ENCODE measurements at regions of chr22 and their contacts with region 1.

Region 1: GRCh38 chr22:40856513-40857308 is at the starts of genes ST13 and XPNPEP3:
- DNase-seq: peak; percentile 96
- H3K4me3 Mint-ChIP-seq: peak within 1 kb of the TSS; percentile 97
- H3K27ac Mint-ChIP-seq: peak within 1 kb of the TSS; percentile 99
- H3K4me1 Mint-ChIP-seq: peaks cover 15% of the 10 kb centered on the region
- H3K27me3 Mint-ChIP-seq: no peaks in the 10 kb centered on the region
- CTCF ChIP-seq: no peak
- total RNA-seq, gene ST13: 191 and 231 TPM in 2 replicates
- total RNA-seq, gene XPNPEP3: 33.1 and 47.2 TPM in 2 replicates

Region 2: DNA sequence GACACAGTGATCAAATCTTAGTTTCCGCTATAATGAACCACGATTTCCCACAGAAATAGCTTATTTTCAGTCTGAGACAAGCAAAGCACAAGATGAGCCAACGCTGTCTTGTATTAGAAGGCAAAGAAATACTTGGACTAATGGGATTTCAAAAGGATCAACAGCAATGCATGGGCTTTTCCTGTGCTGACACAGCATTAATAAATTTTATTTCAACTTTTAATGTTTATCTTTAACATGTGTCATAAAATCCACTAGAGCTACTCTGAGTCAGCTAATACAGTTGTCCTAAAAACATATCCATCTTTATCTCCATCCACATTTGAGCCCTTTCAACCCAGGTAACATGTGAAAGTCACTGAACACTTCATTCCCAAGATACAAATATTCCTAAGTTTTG is 22.1 kb before region 1 on chr22:
- CTCF ChIA-PET with region 1: interaction called, 4 read pairs
- POLR2A ChIA-PET with region 1: interaction called, 11 read pairs
- intact Hi-C with region 1: no loop called
- DNase-seq: no peak
- H3K4me3 Mint-ChIP-seq: no peak overlapping the region
- H3K27ac Mint-ChIP-seq: no peak overlapping the region
- H3K4me1 Mint-ChIP-seq: no peaks in the 10 kb centered on the region
- H3K27me3 Mint-ChIP-seq: no peaks in the 10 kb centered on the region
- CTCF ChIP-seq: no peak

Region 3: DNA sequence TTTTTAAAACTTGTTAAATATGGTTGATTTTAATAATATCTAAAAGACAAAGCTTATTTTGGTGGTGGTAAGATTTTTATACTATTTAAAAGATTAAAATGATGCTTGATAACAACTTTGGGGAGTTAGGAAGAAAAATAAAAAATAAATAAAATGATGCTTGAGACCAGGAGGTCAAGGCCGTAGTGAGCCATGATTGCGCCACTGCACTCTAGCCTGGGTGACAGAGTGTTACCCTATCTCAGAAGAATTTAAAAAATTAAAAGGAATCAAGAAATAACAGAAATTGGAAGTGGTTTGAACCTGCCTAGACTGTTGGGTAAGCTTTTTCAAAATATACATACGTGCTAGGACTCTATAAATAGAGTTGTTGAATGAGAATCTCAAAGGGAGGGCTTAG is 17.3 kb after region 1 on chr22:
- CTCF ChIA-PET with region 1: interaction called, 4 read pairs
- POLR2A ChIA-PET with region 1: interaction called, 58 read pairs
- intact Hi-C with region 1: no loop called
- DNase-seq: no peak
- H3K4me3 Mint-ChIP-seq: no peak overlapping the region
- H3K27ac Mint-ChIP-seq: no peak overlapping the region
- H3K4me1 Mint-ChIP-seq: no peaks in the 10 kb centered on the region
- H3K27me3 Mint-ChIP-seq: no peaks in the 10 kb centered on the region
- CTCF ChIP-seq: no peak

Region 4: DNA sequence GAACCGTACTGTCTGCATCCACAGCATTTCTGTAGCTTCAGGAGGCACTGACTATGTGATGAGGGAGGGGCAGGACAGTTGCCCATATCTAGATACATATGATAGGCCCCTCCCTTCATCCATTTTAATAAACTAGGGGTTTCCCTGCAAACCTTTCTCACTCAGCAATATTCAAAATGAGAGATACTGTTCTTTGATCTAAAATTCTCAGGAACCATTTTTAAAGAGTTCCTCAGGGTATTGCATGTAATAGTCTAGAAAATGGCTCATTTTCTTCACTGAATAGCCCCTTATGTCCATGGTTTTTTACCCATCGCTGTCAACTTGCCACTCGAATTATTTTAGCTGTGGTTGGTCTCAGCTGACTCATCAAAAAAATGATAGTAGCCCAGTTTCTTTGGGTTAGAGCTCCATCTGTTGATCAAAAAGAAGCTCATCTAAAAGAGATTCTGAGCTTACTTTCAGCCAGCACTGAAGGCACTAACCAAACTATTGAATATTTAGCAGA is 42.2 kb after region 1 on chr22:
- CTCF ChIA-PET with region 1: no interaction called
- POLR2A ChIA-PET with region 1: interaction called, 10 read pairs
- intact Hi-C with region 1: no loop called
- DNase-seq: peak; percentile 53
- H3K4me3 Mint-ChIP-seq: no peak overlapping the region
- H3K27ac Mint-ChIP-seq: no peak overlapping the region
- H3K4me1 Mint-ChIP-seq: peaks cover 6% of the 10 kb centered on the region
- H3K27me3 Mint-ChIP-seq: no peaks in the 10 kb centered on the region
- CTCF ChIP-seq: peak; percentile 50

Region 5: GRCh38 chr22:40990430-40990829 is 133.7 kb after region 1 on chr22:
- CTCF ChIA-PET with region 1: no interaction called
- POLR2A ChIA-PET with region 1: no interaction called
- intact Hi-C with region 1: no loop called
- DNase-seq: no peak
- H3K4me3 Mint-ChIP-seq: no peak overlapping the region
- H3K27ac Mint-ChIP-seq: no peak overlapping the region
- H3K4me1 Mint-ChIP-seq: no peaks in the 10 kb centered on the region
- H3K27me3 Mint-ChIP-seq: peaks cover 60% of the 10 kb centered on the region
- CTCF ChIP-seq: no peak